AG04450 (cell line): ENCODE measurements at regions of chr11 and their contacts with region 1.

Region 1: GRCh38 chr11:85854557-85855340 is 434 bp upstream of the CCDC83 start:
- DNase-seq: peak; percentile 77
- H3K4me3 ChIP-seq: peak overlapping the region; percentile 71
- H3K27ac ChIP-seq: peak overlapping the region; percentile 70
- H3K27me3 ChIP-seq: no peaks in the 10 kb centered on the region
- CTCF ChIP-seq: peak; percentile 54; the same call in 1 of the 2 replicates

Region 2: DNA sequence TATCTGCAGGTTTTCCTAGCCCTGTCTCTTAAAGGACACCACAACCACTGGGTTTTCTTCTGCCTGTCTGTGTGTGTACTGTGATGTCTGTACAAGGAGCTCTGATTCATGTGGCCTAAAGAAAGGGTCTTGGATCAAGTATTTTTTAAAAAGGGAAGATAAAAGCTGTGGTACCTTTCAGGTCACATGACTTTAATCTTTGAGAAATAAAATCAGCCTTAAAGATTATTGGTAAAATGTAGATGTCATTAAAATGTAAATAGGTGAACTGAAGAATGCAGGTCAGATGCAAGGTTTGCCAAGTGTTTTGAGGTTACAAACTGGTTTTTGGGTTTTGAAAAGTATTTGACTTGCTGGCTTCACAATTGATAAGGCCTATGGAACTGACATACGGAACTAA is 485.0 kb before region 1 on chr11:
- CTCF ChIA-PET with region 1: no interaction called
- POLR2A ChIA-PET with region 1: no interaction called
- DNase-seq: no peak
- H3K4me3 ChIP-seq: no peak overlapping the region
- H3K27ac ChIP-seq: no peak overlapping the region
- H3K27me3 ChIP-seq: no peaks in the 10 kb centered on the region
- CTCF ChIP-seq: no peak

Region 3: DNA sequence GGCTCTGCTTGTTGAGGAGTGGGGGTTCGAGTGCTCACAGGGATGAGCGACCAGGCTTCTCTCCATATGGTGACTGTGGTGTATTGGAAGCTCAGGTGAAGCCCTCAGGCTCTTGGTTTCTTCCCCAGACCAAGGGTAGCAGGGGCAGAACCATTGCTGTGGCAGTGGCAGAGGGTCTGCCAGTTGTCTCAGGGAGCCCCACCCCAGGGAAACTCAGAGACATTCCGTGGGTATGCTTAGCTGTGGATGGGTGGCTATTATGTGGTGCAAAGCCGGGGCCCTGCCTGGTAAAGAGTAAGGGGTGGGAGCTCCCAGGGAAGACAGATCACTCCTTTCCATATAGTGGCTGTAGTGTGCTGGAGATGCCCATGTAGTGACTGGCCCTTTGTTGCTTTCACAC is 395.4 kb before region 1 on chr11:
- CTCF ChIA-PET with region 1: no interaction called
- POLR2A ChIA-PET with region 1: no interaction called
- DNase-seq: no peak
- H3K4me3 ChIP-seq: no peak overlapping the region
- H3K27ac ChIP-seq: no peak overlapping the region
- H3K27me3 ChIP-seq: no peaks in the 10 kb centered on the region
- CTCF ChIP-seq: no peak

Region 4: DNA sequence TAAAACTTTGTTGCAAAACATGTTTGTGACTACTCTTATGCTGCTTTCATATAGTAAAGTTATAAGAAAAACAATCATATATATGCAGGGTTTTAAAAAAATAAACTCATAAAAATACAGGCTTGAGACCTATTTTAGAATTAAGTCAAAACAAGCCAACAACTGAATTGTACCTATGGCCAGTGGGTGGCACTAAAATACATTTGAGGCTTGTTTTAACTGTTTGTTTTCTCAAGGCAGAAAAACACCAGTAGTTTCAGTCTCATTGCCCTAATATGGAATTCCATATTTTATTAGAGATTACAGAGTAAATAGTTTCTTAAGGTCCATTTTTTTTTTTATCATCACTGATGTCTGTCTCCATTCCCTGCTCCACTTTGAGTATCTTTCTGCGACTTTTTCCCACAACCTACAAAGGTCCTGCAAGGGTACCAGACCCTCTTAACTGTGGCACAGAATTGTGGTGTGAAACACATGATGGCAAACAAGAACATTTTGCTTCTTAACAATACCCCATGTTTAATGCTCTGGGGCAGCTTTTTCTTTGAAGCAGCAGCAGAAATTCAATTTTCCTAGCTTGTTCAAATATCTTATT is 160.3 kb before region 1 on chr11:
- CTCF ChIA-PET with region 1: interaction called, 19 read pairs
- POLR2A ChIA-PET with region 1: no interaction called
- DNase-seq: no peak
- H3K4me3 ChIP-seq: no peak overlapping the region
- H3K27ac ChIP-seq: no peak overlapping the region
- H3K27me3 ChIP-seq: no peaks in the 10 kb centered on the region
- CTCF ChIP-seq: peak; percentile 54

Region 5: DNA sequence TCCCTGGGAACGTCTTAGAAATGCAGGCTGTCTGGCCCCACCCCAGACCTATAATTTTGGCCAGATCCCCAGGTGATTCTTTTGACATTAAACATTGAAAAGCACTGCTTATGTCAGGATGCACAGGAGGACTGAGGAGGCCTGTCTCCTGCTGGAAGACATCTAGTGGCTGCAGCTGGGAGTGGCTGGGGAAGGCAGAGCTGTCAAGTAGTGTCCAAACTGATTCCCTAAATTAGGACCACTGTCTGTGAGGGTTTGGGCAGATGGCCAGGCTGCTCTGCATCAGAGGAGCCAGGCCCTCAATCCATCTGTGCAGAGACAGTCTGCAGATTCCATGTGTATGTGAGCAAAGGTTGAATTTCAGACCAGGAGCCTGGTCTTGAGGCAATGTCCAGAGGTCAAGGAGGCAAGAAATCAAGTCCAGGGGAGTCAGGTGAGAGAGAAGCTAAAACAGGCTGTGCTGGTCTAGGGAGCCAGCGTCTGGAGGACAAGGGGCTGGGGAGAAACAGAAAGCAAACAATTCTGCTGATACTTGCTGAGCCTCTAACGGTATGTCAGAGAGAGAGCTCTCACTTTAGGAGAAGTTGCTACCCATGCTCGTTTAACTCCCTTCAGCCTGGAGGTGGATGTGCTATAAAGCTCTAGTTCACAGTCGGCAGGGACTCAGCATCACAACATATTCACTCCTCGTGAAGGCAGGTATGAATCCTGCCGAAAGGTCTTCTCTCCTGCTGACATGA is 28.5 kb before region 1 on chr11:
- CTCF ChIA-PET with region 1: interaction called, 10 read pairs
- POLR2A ChIA-PET with region 1: no interaction called
- DNase-seq: no peak
- H3K4me3 ChIP-seq: no peak overlapping the region
- H3K27ac ChIP-seq: peak overlapping the region; percentile 88
- H3K27me3 ChIP-seq: no peaks in the 10 kb centered on the region
- CTCF ChIP-seq: peak; percentile 72

Region 6: DNA sequence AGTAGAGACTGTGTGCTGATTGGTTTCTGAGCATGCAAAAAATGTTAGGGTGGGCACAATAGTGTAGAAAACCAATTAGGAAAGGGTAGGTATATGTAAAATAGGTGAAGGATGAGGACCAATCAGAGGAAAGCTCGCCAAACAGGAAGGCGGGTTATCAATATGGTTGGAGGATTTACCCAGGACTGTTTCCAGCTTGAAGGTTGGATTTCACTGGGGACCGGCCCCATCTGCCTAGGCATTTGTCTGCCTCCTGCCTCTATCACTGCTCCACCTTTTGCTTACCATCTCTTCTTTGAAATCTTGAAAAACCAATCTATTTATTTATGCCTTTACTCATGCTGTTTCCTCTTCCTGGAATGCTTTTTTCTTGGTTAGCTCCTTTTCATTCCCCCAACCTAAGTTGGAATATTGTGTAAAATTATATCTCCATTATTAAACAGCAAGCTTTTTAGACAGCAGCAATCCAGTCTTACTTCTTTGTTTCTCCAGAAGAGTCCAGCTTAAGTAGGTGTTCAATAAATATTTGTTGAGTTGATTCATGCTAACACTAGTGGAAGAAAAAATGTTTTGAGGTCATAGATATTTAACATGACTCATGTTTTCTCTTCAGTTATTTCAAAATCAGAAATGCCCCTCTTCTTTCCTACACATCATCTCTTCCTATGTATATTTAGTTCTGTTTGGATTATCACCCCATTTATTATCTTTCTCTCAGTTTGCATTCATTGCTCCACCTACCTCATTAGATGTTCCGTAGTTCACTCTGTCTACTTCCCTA is 20.6 kb after region 1 on chr11:
- CTCF ChIA-PET with region 1: interaction called, 13 read pairs
- POLR2A ChIA-PET with region 1: no interaction called
- DNase-seq: no peak
- H3K4me3 ChIP-seq: no peak overlapping the region
- H3K27ac ChIP-seq: no peak overlapping the region
- H3K27me3 ChIP-seq: no peaks in the 10 kb centered on the region
- CTCF ChIP-seq: no peak

Region 7: GRCh38 chr11:85918910-85919794 is 64.4 kb after region 1 on chr11:
- CTCF ChIA-PET with region 1: no interaction called
- POLR2A ChIA-PET with region 1: no interaction called
- DNase-seq: no peak
- H3K4me3 ChIP-seq: no peak overlapping the region
- H3K27ac ChIP-seq: no peak overlapping the region
- H3K27me3 ChIP-seq: peaks cover 14% of the 10 kb centered on the region
- CTCF ChIP-seq: no peak

Region 8: GRCh38 chr11:85955531-85955930 is 100.8 kb after region 1 on chr11:
- CTCF ChIA-PET with region 1: no interaction called
- POLR2A ChIA-PET with region 1: no interaction called
- DNase-seq: peak; percentile 39
- H3K4me3 ChIP-seq: no peak overlapping the region
- H3K27ac ChIP-seq: no peak overlapping the region
- H3K27me3 ChIP-seq: no peaks in the 10 kb centered on the region
- CTCF ChIP-seq: no peak

Region 9: DNA sequence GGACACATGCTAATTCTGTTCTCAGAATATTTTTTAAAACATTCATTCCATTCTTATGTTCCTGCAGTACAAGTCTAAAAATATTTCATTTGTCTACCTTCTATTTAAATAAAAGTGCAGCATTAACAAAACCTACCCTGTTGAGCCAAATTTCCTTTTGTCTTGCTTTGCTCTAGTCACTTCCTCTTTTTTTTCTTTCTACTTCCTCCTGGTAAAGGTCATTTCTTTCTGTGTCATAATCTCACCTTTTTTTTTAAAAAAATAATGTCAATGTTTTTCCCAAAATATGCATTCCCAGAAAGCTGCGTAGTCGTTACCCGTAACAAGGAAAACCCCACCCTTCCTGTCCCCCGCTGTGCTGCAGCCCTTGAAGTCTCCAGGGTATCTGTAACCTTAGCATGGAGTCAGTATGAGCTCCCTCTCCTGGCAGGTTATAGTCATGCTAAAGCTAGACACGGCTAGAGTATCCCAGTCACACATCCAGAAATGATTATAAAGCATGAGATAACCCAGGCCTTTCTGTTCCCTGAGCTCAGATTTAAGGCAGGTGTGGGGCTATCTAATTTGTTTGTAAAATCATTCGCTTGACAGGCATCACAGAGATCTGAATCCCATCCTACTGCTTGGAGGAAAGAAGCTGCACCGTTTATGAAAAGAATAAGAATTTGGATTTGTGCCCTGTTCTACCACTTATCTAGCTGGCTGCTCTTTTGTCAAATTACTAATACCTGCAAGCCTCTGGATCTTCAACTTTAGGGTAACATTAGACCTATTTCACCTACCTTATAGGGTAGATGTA is 338.7 kb after region 1 on chr11:
- CTCF ChIA-PET with region 1: interaction called, 10 read pairs
- POLR2A ChIA-PET with region 1: interaction called, 3 read pairs
- DNase-seq: peak; percentile 47
- H3K4me3 ChIP-seq: no peak overlapping the region
- H3K27ac ChIP-seq: no peak overlapping the region
- H3K27me3 ChIP-seq: no peaks in the 10 kb centered on the region
- CTCF ChIP-seq: peak; percentile 85

Region 10: GRCh38 chr11:86291466-86292262 is 436.9 kb after region 1 on chr11:
- CTCF ChIA-PET with region 1: interaction called, 30 read pairs
- POLR2A ChIA-PET with region 1: no interaction called
- DNase-seq: no peak
- H3K4me3 ChIP-seq: no peak overlapping the region
- H3K27ac ChIP-seq: no peak overlapping the region
- H3K27me3 ChIP-seq: no peaks in the 10 kb centered on the region
- CTCF ChIP-seq: peak; percentile 71